PC-3 (cell line): ENCODE measurements at regions of chr14 and their contacts with region 1.

Region 1: GRCh38 chr14:24431569-24432258 is 2.0 kb downstream of the KHNYN start:
- DNase-seq: peak; percentile 93
- ATAC-seq: peak; percentile 54
- H3K4me3 ChIP-seq: peak overlapping the region; percentile 98
- H3K27ac ChIP-seq: peak overlapping the region; percentile 85
- H3K4me1 ChIP-seq: peaks cover 47% of the 10 kb centered on the region
- H3K27me3 ChIP-seq: no peaks in the 10 kb centered on the region
- CTCF ChIP-seq: peak; percentile 98

Region 2: DNA sequence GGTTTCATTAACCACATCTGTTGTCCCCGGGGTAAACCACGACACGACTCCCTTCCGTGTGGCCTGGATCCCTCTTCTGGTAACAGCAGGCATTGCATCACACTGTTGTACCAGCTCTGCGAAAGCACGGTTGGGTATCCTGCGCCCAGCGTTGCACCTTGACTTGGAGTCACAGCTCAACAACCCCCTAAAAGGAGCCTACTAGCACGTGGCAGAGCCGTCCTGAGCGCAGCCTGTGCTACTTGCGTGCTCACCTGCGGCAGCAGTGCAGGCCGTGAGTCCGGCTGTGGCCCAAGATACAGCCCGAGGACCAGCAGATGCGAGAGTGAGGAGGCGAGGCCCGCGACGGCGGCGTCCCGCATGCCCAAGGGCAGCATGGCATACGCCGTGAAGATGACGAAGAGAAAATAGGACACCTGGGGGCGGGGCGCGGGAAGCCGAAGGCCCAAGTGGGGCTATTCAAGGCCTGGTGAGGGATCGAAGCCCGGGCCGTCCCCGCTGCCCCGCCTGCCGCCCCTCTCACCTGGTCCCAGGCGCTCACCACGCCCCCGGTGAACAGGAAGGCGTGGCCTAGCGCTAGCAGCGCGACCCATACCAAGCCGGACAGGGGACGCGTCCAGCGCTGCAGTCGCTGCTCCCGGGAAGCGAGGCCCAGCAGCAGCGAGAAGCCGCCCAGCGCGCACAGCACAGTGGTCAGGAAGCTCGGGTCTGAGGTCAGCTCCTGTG is 99.3 kb before region 1 on chr14:
- CTCF ChIA-PET with region 1: interaction called, 27 read pairs
- POLR2A ChIA-PET with region 1: no interaction called
- intact Hi-C with region 1: loop called (anchors 1 kb)
- DNase-seq: peak; percentile 65
- ATAC-seq: peak; percentile 69
- H3K4me3 ChIP-seq: no peak overlapping the region
- H3K27ac ChIP-seq: no peak overlapping the region
- H3K4me1 ChIP-seq: peaks cover 5% of the 10 kb centered on the region; the same call in 1 of the 2 replicates
- H3K27me3 ChIP-seq: no peaks in the 10 kb centered on the region
- CTCF ChIP-seq: peak; percentile 76

Region 3: DNA sequence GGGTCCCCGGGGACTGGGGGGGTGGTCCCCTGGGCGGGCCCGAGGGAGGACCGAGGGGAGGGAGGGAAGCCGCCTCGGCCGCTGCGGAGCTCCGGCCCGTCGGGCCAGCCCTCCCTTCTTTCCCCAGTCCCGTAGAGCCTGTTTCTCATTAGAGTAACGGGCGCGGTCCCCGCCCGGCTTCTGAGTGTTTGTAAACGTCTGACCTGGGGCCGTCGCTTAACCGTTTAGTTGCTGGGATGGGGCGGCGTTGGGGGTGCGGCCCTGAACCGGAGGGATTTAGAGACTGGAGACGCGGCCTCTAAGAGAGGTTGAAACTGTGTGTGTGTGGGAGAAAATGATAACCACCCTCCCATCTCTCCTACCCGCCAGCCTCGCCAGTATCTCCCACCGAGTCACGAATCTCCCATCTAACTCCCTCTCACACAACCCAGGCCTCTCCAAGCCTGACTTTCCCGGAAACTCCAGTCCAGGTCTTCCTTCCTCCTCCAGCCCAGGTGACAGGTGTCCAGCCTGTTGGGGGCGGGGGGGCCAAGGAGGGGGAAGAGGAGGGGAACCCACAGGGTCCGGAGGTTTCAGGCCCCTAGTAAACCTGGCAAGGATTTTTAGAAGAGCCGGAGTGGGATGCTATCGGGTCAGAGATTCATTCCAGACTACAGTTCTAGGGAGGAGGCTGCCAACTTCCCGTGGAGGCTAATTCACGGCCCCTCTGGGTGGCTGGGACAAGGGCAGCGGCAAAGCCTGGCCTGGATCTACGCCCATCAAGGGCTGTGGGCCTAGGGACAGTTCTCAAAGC is 64.8 kb before region 1 on chr14:
- CTCF ChIA-PET with region 1: interaction called, 51 read pairs
- POLR2A ChIA-PET with region 1: interaction called, 45 read pairs
- intact Hi-C with region 1: loop called (anchors 1 kb)
- DNase-seq: peak; percentile 95
- ATAC-seq: peak; percentile 66
- H3K4me3 ChIP-seq: peak overlapping the region; percentile 63
- H3K27ac ChIP-seq: peak overlapping the region; percentile 73
- H3K4me1 ChIP-seq: peaks cover 24% of the 10 kb centered on the region
- H3K27me3 ChIP-seq: no peaks in the 10 kb centered on the region
- CTCF ChIP-seq: no peak

Region 4: DNA sequence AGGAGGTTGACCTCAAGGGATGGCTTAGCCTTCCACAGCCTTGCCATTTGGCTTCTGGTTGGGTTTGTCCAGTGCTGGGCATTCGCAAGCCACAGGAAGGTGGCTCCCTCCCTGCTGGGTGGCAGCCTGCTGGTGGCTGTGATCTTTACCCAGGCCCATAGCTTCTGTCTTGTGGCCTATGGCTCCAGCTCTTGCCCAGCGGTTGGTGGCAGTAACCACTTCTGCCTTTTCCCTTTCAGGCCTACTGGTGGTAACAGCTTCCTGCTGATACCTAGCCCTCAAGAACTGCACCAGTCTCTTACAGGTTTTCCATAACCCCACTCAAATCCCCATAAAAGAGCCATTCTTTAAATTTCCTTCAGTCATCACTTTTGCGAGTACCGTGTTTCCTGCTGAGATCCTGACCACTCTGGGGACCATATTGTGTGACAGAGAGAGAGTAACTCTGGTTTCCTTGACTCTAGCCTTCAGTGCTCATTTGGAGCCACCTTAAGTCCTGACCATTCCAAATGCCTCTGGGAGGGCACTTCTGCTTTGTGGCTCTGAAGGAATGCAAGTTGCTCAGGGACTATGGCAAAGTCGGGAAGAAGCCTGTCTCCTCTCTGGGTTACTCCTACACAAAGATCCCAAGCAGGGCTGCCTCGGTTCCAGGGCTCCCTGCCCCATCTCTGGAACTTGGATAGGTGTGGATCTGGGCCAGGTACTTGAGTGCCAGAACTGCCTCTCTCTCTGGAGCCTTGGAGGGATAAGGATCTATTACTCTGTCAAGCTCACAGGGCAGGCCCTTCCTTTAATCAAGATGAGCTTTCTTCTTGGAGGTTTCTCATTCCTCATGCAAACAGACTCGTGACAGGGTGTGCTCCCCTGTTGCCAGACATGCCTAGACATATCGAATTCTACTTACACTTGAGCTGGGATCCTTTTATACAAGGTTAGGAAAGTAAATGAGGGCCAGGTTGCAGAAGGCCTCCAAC is 35.8 kb before region 1 on chr14:
- CTCF ChIA-PET with region 1: no interaction called
- POLR2A ChIA-PET with region 1: no interaction called
- intact Hi-C with region 1: loop called (anchors 2 kb)
- DNase-seq: no peak
- ATAC-seq: no peak
- H3K4me3 ChIP-seq: no peak overlapping the region
- H3K27ac ChIP-seq: no peak overlapping the region
- H3K4me1 ChIP-seq: peaks cover 25% of the 10 kb centered on the region
- H3K27me3 ChIP-seq: no peaks in the 10 kb centered on the region
- CTCF ChIP-seq: no peak

Region 5: DNA sequence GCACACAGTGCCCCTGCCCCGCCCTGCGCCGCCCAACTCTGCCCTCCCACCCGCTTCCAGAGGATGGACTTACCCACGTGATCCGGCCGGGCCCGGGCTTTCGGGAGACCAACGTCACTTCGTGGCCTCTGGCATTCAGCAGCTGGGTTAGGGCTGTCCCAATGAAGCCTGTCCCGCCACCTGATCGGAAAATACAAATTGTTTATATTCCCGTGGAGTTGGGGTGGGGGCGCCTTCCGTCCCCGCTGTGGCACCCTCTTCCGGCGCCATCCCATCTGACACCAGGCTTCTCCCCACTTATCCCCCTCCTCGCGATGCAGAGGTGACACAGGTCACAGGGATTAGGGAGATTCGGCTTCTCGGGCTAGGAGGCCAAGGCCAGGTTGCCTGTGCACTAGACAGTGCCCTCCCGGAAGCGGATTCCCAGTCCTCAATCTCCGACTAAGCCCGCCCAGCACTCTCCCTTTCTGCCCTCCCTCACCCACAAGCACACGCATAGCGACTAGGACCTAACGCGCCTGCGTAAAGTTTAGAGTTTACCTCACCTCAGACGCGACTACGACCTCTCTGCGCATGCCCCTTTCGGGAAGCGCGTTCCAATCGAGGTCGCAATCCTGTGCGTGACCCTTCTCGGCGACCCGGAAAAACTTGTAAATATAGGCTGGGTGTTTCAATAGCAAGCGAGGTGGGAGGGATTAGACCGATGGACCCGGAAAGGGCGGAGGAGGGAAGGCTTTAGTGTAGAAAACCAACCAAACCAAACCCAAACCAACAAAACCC is 10.7 kb after region 1 on chr14 and contains the start of gene SDR39U1:
- CTCF ChIA-PET with region 1: interaction called, 11 read pairs
- POLR2A ChIA-PET with region 1: interaction called, 4 read pairs
- intact Hi-C with region 1: no loop called
- DNase-seq: peak; percentile 99
- ATAC-seq: peak; percentile 85
- H3K4me3 ChIP-seq: peak within 1 kb of the TSS; percentile 84
- H3K27ac ChIP-seq: peak within 1 kb of the TSS; percentile 97
- H3K4me1 ChIP-seq: peaks cover 10% of the 10 kb centered on the region
- H3K27me3 ChIP-seq: no peaks in the 10 kb centered on the region
- CTCF ChIP-seq: no peak
- total RNA-seq, gene SDR39U1: 24.7 and 29.8 TPM in 2 replicates

Region 6: DNA sequence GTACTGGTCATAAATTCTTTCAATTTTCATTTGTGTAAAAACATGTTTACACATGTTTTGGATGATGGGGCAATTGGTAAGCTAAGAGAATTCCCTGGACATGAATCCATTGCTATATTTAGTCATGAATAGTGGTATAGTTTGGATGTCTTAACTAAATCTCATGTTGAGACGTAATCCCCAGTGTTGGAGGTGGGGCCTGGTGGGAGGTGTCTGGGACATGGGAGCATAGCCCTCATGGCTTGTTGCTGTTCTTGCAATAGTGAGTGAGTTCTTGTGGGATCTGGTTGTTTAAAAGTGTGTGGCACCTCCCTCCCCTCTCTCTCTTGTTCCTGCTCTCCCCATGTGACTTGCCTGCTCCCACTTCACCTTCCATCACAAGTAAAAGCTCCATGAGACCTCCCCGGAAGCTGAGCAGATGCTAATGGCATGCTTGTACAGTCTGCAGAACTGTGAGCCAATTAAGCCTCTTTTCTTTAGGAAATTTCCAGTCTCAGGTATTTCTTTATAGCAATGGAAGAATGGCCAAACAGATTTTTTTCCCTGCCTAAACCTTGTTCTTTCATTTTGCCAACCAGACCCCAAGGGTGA is 110.7 kb after region 1 on chr14:
- CTCF ChIA-PET with region 1: no interaction called
- POLR2A ChIA-PET with region 1: no interaction called
- intact Hi-C with region 1: no loop called
- DNase-seq: no peak
- ATAC-seq: no peak
- H3K4me3 ChIP-seq: no peak overlapping the region
- H3K27ac ChIP-seq: no peak overlapping the region
- H3K4me1 ChIP-seq: no peaks in the 10 kb centered on the region
- H3K27me3 ChIP-seq: no peaks in the 10 kb centered on the region
- CTCF ChIP-seq: no peak